ENCODE measurements at regions of chr14 and their contacts with region 1.

Region 1: GRCh38 chr14:85463512-85463911 is 66.4 kb upstream of the FLRT2 start:
- DNase-seq: no peak
- H3K4me3 ChIP-seq: no peak overlapping the region
- H3K27ac ChIP-seq: no peak overlapping the region
- H3K4me1 ChIP-seq: no peaks in the 10 kb centered on the region
- H3K27me3 ChIP-seq: no peaks in the 10 kb centered on the region
- CTCF ChIP-seq: no peak
- POLR2A ChIP-seq: no peak

Region 2: DNA sequence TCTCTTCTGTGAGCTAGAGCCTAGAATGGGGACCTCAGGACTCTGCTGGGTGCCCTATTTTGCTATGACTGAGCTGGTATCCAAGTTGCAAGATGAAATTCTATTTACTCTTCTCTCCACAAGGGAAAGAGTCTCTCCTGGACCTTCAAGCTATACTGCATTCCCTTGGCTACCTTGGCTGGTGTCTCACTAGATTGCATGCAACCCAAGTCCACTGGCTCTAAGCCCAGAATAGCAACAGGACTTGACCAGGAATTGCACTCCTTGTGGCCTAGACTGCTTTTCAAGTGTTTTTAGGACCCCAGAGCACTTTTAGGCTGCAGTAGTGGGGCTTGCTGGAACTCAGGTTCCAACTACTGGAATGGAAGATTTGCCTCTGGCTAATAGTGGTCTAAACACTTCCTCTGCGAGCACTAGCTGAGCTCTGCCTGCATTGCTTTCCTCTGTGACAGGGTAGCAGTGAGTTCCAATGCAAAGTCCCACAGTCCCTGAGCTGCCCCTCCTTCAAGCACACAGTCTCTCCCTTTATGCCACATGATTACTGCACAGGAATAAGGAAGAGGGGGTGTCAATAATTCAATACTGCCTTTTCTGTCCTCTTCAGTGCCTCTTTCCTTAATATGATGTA is 942.7 kb before region 1 on chr14:
- intact Hi-C with region 1: no loop called
- DNase-seq: no peak
- H3K4me3 ChIP-seq: no peak overlapping the region
- H3K27ac ChIP-seq: no peak overlapping the region
- H3K4me1 ChIP-seq: no peaks in the 10 kb centered on the region
- H3K27me3 ChIP-seq: no peaks in the 10 kb centered on the region
- CTCF ChIP-seq: no peak
- POLR2A ChIP-seq: no peak

Region 3: GRCh38 chr14:84760461-84761126 is 702.9 kb before region 1 on chr14:
- intact Hi-C with region 1: loop called (anchors 5 kb)
- DNase-seq: no peak
- H3K4me3 ChIP-seq: no peak overlapping the region
- H3K27ac ChIP-seq: no peak overlapping the region
- H3K4me1 ChIP-seq: no peaks in the 10 kb centered on the region
- H3K27me3 ChIP-seq: no peaks in the 10 kb centered on the region
- CTCF ChIP-seq: no peak
- POLR2A ChIP-seq: no peak

Region 4: DNA sequence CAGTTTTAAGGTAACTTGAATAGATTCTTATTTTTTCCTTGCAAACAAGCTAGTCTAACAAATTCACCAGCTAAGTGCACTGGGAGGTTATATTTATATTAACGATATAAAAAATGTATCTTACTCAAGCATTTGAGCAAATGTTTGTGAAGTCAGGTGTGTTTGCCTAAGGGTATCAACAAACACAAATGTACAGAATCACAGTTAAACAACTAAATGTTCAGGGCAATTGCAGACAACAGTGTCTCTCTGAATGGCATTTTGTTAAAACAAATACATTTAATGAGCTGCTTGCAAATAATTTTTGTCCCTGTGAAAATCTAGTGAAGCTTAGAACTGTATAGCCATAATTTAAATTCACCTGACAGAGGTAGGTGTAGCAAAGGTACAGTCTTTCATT is 38.2 kb after region 1 on chr14:
- intact Hi-C with region 1: no loop called
- DNase-seq: no peak
- H3K4me3 ChIP-seq: no peak overlapping the region
- H3K27ac ChIP-seq: no peak overlapping the region
- H3K4me1 ChIP-seq: no peaks in the 10 kb centered on the region
- H3K27me3 ChIP-seq: no peaks in the 10 kb centered on the region
- CTCF ChIP-seq: no peak
- POLR2A ChIP-seq: no peak